Mucosa of descending colon (tissue), 3 donors: ENCODE measurements at regions of chr13 and their contacts with region 1.

Region 1: GRCh38 chr13:46831588-46832194 is 34.7 kb upstream of the ESD start:
- DNase-seq: peak in 1 of 3 donors; percentile 80
- ATAC-seq: peak; percentile 59
- H3K4me3 ChIP-seq: no peak overlapping the region
- H3K4me1 ChIP-seq: no peaks in the 10 kb centered on the region
- CTCF ChIP-seq: no peak

Region 2: GRCh38 chr13:46341112-46341711 is 490.5 kb before region 1 on chr13:
- intact Hi-C with region 1: no loop called
- DNase-seq: no peak
- ATAC-seq: peak; percentile 51
- H3K4me3 ChIP-seq: no peak overlapping the region
- H3K4me1 ChIP-seq: no peaks in the 10 kb centered on the region
- CTCF ChIP-seq: no peak

Region 3: GRCh38 chr13:47774671-47774994 is 942.9 kb after region 1 on chr13:
- intact Hi-C with region 1: loop called in 1 of 2 experiments (anchors 5 kb)
- DNase-seq: no peak
- ATAC-seq: no peak
- H3K4me3 ChIP-seq: no peak overlapping the region
- H3K4me1 ChIP-seq: no peaks in the 10 kb centered on the region
- CTCF ChIP-seq: no peak